ENCODE measurements at regions of chr17 and their contacts with region 1.

Region 1: GRCh38 chr17:28405632-28406472 is at the start of gene SLC46A1:
- DNase-seq: peak; percentile 70

Region 2: GRCh38 chr17:28394717-28395116 is 11.1 kb before region 1 on chr17:
- CTCF ChIA-PET with region 1: interaction called, 5 read pairs
- POLR2A ChIA-PET with region 1: interaction called, 22 read pairs
- DNase-seq: no peak

Region 3: GRCh38 chr17:28416703-28417311 is 11.0 kb after region 1 on chr17:
- CTCF ChIA-PET with region 1: interaction called, 45 read pairs
- POLR2A ChIA-PET with region 1: interaction called, 29 read pairs
- DNase-seq: peak; percentile 65

Measured in HEK293T (cell line).